ENCODE measurements at regions of chr5 and their contacts with region 1.

Region 1: GRCh38 chr5:128213340-128213739 is 129.8 kb downstream of the SLC12A2 start:
- DNase-seq: no peak
- ATAC-seq: peak; percentile 83
- H3K4me3 ChIP-seq: no peak overlapping the region
- H3K27ac ChIP-seq: no peak overlapping the region
- H3K4me1 ChIP-seq: no peaks in the 10 kb centered on the region
- H3K27me3 ChIP-seq: no peaks in the 10 kb centered on the region
- CTCF ChIP-seq: peak; percentile 66 to 85 (median 71); a peak in 5 of 6 replicates
- EP300 ChIP-seq: no peak
- POLR2A ChIP-seq: no peak
- RAD21 ChIP-seq: peak; percentile 96

Region 2: DNA sequence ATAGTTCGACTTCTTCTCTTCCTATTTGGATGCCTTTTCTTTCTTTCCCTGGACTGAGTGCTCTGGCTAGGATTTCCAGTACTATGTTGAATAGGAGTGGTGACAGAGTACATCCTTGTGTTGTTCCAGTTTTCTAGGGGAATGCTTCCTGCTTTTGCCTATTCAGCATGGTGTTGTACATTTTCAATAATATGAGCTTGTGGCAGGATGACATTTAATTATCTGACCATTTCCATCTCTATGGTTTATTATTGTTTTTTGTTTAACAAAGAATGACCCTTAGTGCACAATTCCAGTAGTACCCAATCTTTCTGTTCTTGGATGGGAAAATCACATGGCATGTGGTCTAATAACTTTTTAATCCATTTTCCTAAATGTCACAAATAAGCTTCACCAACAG is 265.4 kb before region 1 on chr5:
- CTCF ChIA-PET with region 1: no interaction called
- POLR2A ChIA-PET with region 1: no interaction called
- RAD21 ChIA-PET with region 1: no interaction called
- SMC1A ChIA-PET with region 1: no interaction called
- in situ Hi-C with region 1: no loop called
- intact Hi-C with region 1: no loop called
- DNase-seq: no peak
- ATAC-seq: no peak
- H3K4me3 ChIP-seq: no peak overlapping the region
- H3K27ac ChIP-seq: no peak overlapping the region
- H3K4me1 ChIP-seq: no peaks in the 10 kb centered on the region; the same call in 1 of the 2 replicates
- H3K27me3 ChIP-seq: no peaks in the 10 kb centered on the region
- CTCF ChIP-seq: no peak
- EP300 ChIP-seq: no peak
- POLR2A ChIP-seq: no peak
- RAD21 ChIP-seq: no peak

Region 3: DNA sequence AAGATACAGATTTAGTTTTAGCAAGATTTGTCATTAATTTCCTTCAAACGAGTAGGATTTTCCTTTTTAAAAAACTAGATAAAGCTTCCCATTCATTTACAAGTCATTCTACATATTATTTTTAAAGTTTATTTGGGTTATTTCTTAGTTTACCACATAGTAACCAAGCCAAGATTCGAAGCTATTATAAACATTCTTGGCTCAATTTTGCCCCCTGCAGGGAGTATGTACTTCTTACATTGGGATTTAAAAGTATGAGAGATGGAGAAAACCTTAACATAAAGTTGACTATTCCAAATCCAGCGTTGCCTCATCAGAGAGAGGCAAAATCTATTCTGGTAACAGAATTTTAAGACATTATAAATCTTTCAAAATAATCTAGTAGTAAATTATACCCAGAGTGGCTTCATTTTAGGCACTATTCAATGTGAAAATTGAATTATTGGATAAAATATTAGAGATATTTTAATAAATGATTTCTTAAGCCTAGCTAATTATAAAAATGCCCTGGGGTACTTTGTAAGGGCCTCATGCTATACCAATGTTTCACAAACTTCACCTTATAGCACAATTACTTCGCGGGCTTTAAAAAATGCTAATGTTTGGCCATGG is 285.6 kb after region 1 on chr5:
- CTCF ChIA-PET with region 1: interaction called, 51 read pairs
- POLR2A ChIA-PET with region 1: interaction called, 4 read pairs
- RAD21 ChIA-PET with region 1: interaction called, 34 read pairs
- SMC1A ChIA-PET with region 1: interaction called, 82 read pairs
- in situ Hi-C with region 1: loop called (anchors 5 kb)
- intact Hi-C with region 1: loop called (anchors 1 kb)
- DNase-seq: no peak
- ATAC-seq: peak; percentile 57
- H3K4me3 ChIP-seq: no peak overlapping the region
- H3K27ac ChIP-seq: no peak overlapping the region
- H3K4me1 ChIP-seq: no peaks in the 10 kb centered on the region
- H3K27me3 ChIP-seq: no peaks in the 10 kb centered on the region
- CTCF ChIP-seq: peak; percentile 28 to 41 (median 30); a peak in 4 of 6 replicates
- EP300 ChIP-seq: no peak
- POLR2A ChIP-seq: no peak
- RAD21 ChIP-seq: peak; percentile 71

Region 4: GRCh38 chr5:128674825-128675446 is 461.6 kb after region 1 on chr5:
- CTCF ChIA-PET with region 1: interaction called, 23 read pairs
- POLR2A ChIA-PET with region 1: no interaction called
- RAD21 ChIA-PET with region 1: interaction called, 6 read pairs
- SMC1A ChIA-PET with region 1: interaction called, 3 read pairs
- in situ Hi-C with region 1: loop called (anchors 10 kb)
- intact Hi-C with region 1: loop called (anchors 1 kb)
- DNase-seq: no peak
- ATAC-seq: peak; percentile 92
- H3K4me3 ChIP-seq: no peak overlapping the region
- H3K27ac ChIP-seq: no peak overlapping the region
- H3K4me1 ChIP-seq: no peaks in the 10 kb centered on the region
- H3K27me3 ChIP-seq: no peaks in the 10 kb centered on the region
- CTCF ChIP-seq: peak; percentile 60 to 68 (median 63)
- EP300 ChIP-seq: no peak
- POLR2A ChIP-seq: no peak
- RAD21 ChIP-seq: peak; percentile 53

Region 5: DNA sequence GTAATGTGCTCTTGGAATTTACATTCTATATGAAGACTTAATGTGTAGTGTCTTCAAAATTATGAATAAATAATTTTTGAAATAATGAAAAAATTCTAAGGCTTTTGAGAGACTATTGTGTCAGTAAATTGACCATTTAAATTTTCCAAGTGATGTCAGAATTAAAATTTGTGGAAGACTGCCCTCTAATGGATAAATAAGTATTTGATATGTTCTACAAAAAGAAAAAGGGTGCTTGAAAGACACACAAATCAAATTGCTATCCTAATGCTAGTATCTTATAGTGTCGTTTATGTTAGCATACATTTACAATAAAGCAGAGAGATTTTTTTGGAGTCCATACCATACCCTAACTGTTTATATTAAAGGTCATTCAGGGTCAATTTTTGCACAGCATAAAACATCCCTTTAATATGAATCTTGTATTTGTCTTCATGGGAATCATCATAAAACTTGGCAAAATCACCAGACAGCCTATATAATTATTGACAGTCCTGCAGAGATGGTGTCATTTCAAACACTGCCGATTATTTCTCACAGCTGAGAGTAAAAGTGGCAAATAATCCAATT is 631.1 kb after region 1 on chr5:
- CTCF ChIA-PET with region 1: interaction called, 4 read pairs
- POLR2A ChIA-PET with region 1: no interaction called
- RAD21 ChIA-PET with region 1: interaction called, 3 read pairs
- SMC1A ChIA-PET with region 1: interaction called, 3 read pairs
- in situ Hi-C with region 1: loop called (anchors 10 kb)
- intact Hi-C with region 1: loop called (anchors 5 kb)
- DNase-seq: no peak
- ATAC-seq: no peak
- H3K4me3 ChIP-seq: no peak overlapping the region
- H3K27ac ChIP-seq: no peak overlapping the region
- H3K4me1 ChIP-seq: no peaks in the 10 kb centered on the region
- H3K27me3 ChIP-seq: no peaks in the 10 kb centered on the region
- CTCF ChIP-seq: no peak; a peak in 1 of 6 replicates
- EP300 ChIP-seq: no peak
- POLR2A ChIP-seq: no peak
- RAD21 ChIP-seq: peak; percentile 21; the same call in 1 of the 2 replicates

Region 6: GRCh38 chr5:129135633-129136032 is 922.3 kb after region 1 on chr5:
- CTCF ChIA-PET with region 1: no interaction called
- POLR2A ChIA-PET with region 1: no interaction called
- RAD21 ChIA-PET with region 1: no interaction called
- SMC1A ChIA-PET with region 1: no interaction called
- in situ Hi-C with region 1: no loop called
- intact Hi-C with region 1: loop called (anchors 5 kb)
- DNase-seq: no peak
- ATAC-seq: peak; percentile 87
- H3K4me3 ChIP-seq: no peak overlapping the region
- H3K27ac ChIP-seq: no peak overlapping the region
- H3K4me1 ChIP-seq: no peaks in the 10 kb centered on the region
- H3K27me3 ChIP-seq: no peaks in the 10 kb centered on the region
- CTCF ChIP-seq: peak; percentile 17 to 68 (median 48); a peak in 4 of 6 replicates
- EP300 ChIP-seq: no peak
- POLR2A ChIP-seq: no peak
- RAD21 ChIP-seq: peak; percentile 44